Activated naive CD4-positive, alpha-beta T cell treated with anti-CD3 and anti-CD28 coated beads, Interleukin-2, amount 10 ng/mL, durations not matched to agents 7 days and 5 days (primary cell): ENCODE measurements at regions of chr3 and their contacts with region 1.

Region 1: DNA sequence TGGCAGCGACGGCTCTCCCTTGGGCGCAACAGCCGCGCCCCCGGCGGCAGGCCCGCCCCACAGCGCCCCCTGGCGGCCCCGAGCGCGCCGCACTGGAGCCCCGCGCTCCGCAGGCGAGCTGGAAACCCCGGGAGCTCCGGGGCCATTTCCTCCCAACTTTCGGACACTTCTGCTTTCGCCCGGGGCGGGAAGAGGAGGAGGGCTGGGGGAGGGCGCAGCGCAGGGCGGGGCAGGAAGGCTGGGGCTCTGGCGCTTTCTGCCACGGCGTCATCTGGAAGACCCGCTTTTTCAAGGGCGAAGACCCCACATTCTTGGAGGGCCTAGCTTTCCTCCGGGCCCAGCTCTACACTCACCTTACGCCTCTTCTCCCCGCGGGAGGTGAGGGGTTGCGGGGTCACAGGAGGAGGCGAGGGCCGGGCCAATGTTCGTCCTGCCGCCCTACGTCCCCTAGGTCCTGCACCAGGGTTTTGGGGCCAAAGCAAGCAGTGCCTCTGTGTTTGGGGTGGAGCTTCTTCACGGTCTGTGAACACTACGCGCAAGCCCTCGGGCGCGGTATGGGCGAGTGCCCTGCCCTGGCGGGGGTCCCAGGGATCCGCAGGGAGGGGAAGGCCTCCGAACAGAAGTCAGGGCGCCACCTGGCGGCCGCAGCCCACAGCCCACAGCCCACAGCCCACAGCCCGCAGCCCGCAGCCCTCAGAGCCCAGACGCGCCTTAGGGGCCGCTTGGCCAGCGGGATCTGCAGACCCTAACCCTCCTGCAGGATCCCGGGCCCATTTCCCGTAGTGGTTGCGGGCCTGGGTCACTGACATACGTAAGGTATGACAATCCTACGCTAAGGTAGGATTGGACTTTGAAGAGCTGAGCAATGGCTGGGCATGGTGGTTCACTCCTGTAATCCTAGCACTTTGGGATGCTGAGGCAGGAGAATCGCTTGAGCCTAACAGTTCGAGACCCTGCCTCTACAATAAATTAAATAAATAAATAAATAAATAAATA is 31.1 kb downstream of the FOXL2 start:
- DNase-seq: peak; percentile 85
- H3K4me3 Mint-ChIP-seq: peak overlapping the region; percentile 80
- H3K27ac Mint-ChIP-seq: peak overlapping the region; percentile 76
- H3K4me1 Mint-ChIP-seq: peaks cover 7% of the 10 kb centered on the region
- H3K27me3 Mint-ChIP-seq: peaks cover 36% of the 10 kb centered on the region

Region 2: DNA sequence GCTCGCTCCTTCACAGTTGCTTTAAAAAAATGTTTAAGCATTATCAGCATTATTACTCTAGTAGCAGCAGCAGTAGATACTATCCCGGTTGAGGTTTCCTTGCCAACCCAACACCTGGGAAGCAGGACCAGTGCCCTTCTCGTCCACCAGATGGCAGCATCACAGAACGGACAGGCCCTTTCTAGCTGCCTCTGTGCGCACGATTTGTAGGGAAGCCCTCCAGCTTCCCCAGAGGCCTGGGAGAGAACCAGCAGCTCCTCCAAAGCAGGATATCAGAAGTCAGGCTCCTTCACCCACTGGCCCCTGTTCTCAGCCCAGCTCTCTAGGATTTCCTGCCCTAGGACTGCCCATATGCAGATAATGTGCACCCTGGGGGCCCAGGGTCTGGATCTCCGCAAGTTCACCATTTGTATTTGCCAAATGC is 498.2 kb before region 1 on chr3:
- CTCF ChIA-PET with region 1: interaction called, 23 read pairs
- DNase-seq: peak; percentile 76
- H3K4me3 Mint-ChIP-seq: no peak overlapping the region
- H3K27ac Mint-ChIP-seq: no peak overlapping the region
- H3K4me1 Mint-ChIP-seq: no peaks in the 10 kb centered on the region
- H3K27me3 Mint-ChIP-seq: peaks cover 44% of the 10 kb centered on the region

Region 3: GRCh38 chr3:138594150-138594934 is 321.5 kb before region 1 on chr3 and contains the start of gene CEP70:
- CTCF ChIA-PET with region 1: interaction called, 112 read pairs
- DNase-seq: peak; percentile 94
- H3K4me3 Mint-ChIP-seq: peak within 1 kb of the TSS; percentile 73
- H3K27ac Mint-ChIP-seq: peak within 1 kb of the TSS; percentile 93
- H3K4me1 Mint-ChIP-seq: peaks cover 13% of the 10 kb centered on the region
- H3K27me3 Mint-ChIP-seq: no peaks in the 10 kb centered on the region

Region 4: DNA sequence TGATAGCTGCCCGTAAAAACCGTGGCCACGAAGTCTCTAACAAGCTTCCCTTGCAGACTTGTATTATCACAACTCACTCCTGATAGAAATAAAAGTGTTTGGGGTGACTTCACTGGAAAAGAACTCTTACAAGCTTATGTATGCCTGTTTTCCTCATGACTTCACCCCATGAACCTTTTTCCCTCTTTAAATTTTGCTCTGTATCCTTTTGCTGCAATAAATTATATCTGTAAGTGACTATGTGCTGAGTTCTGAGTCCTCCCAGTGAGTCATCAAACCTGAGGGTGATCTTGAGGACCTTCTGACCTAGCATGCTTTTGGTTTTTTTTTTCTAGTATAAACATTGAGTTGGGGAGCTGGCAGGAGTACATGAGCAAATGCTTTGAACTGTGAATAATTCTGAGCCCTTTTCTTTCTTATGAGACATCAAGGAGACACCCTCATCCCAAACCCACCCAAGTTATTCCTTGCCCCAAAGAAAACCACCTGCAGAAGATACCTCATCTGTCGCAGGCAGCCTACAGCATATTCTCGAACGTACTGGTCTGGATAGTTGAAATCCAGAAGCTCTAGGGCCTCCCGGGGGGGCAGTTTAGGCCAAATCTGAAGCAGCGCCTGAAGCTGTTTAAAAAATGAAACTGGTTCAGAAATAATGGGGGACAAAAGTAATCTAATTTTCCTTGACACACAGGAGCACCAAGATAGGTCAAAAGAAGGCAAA is 221.4 kb before region 1 on chr3:
- CTCF ChIA-PET with region 1: interaction called, 170 read pairs
- DNase-seq: no peak
- H3K4me3 Mint-ChIP-seq: no peak overlapping the region
- H3K27ac Mint-ChIP-seq: no peak overlapping the region
- H3K4me1 Mint-ChIP-seq: no peaks in the 10 kb centered on the region
- H3K27me3 Mint-ChIP-seq: no peaks in the 10 kb centered on the region

Region 5: DNA sequence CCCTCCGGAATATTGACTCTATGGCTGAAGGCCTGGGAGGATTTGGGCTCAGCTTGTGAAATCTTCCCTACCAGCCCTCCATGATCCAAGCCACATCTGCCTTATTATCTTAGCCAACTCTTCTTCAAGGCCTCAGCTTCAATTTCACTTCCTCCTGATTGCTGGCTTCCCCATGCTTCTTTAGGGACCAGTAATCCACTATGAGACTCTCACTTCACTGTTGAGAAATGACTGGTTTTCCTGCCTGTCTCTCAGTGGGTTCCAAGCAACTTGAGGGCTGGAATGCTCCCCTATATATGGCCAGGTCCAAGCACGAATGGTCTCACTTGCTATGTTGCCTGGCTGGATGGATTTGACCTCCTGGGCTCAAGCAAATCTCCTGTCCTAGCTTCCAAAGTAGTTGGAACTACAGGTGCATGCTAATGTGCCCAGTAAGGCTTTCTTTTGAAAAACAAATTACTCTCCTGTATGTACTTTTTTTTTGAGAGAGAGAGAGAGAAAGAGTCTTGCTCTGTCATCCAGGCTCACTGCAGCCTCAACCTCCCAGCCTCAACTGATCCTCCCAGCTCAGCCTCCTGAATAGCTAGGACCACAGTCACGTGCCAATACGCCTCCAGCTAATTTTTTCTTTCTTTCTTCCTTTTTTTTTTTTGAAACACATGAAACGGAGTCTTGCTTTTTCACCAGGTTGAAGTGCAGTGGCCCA is 73.2 kb before region 1 on chr3:
- CTCF ChIA-PET with region 1: interaction called, 11 read pairs
- DNase-seq: no peak
- H3K4me3 Mint-ChIP-seq: no peak overlapping the region
- H3K27ac Mint-ChIP-seq: no peak overlapping the region
- H3K4me1 Mint-ChIP-seq: no peaks in the 10 kb centered on the region
- H3K27me3 Mint-ChIP-seq: peaks cover 4% of the 10 kb centered on the region